GM12878 (cell line): ENCODE measurements at regions of chr12 and their contacts with region 1.

Region 1: GRCh38 chr12:98227162-98227561 is 288.2 kb upstream of the TMPO start:
- DNase-seq: no peak
- ATAC-seq: no peak
- H3K4me3 ChIP-seq: no peak overlapping the region
- H3K27ac ChIP-seq: no peak overlapping the region
- H3K4me1 ChIP-seq: peaks cover 6% of the 10 kb centered on the region
- H3K27me3 ChIP-seq: no peaks in the 10 kb centered on the region
- CTCF ChIP-seq: peak in 1 of 3 experiments; percentile 26; a peak in 1 of 6 replicates
- EP300 ChIP-seq: no peak
- POLR2A ChIP-seq: no peak
- RAD21 ChIP-seq: peak; percentile 47; the same call in 1 of the 2 replicates

Region 2: GRCh38 chr12:98042668-98043067 is 184.5 kb before region 1 on chr12:
- CTCF ChIA-PET with region 1: no interaction called
- POLR2A ChIA-PET with region 1: no interaction called
- RAD21 ChIA-PET with region 1: no interaction called
- SMC1A ChIA-PET with region 1: no interaction called
- in situ Hi-C with region 1: no loop called
- intact Hi-C with region 1: no loop called
- DNase-seq: no peak
- ATAC-seq: no peak
- H3K4me3 ChIP-seq: no peak overlapping the region
- H3K27ac ChIP-seq: no peak overlapping the region
- H3K4me1 ChIP-seq: no peaks in the 10 kb centered on the region
- H3K27me3 ChIP-seq: no peaks in the 10 kb centered on the region
- CTCF ChIP-seq: no peak
- EP300 ChIP-seq: no peak
- POLR2A ChIP-seq: no peak
- RAD21 ChIP-seq: no peak

Region 3: DNA sequence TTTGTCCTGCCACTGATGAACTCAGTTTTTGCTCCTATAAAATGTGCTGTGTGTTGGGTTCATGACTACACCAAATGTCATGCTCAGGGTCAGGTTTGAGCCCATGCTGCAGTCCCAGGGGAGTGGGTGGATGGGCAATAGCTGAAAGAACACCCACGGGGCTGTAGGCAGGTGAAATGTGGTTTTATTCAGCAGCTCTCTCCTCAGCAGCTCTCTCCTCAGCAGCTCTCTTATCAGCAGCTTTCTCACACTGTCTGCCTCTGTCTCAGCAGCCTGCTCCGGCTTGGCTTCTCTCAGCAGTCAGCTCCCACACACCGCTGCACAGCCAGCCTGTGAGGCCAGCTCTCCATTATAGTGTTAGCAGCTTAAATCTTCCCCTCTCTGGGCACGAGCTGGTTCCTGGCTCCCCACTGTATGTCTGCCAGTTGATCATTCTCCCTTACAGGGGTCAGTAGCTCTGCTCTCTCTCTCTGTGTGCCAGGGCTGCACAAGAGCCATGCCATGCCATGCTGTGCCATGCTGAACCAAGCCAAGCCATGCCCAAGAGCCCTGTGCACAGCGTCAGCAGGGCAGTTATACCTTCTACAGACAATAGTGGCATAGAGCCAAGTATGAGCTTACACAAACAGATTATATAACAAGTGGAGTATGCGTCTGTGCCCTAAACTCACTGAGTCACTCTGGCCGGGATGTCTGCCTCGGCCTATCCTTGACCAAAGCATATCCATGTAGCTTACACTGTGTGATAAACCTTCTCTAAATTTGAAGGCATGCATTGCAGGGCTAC is 15.1 kb before region 1 on chr12:
- CTCF ChIA-PET with region 1: interaction called, 7 read pairs
- POLR2A ChIA-PET with region 1: interaction called, 6 read pairs
- RAD21 ChIA-PET with region 1: interaction called, 13 read pairs
- SMC1A ChIA-PET with region 1: interaction called, 16 read pairs
- in situ Hi-C with region 1: no loop called
- intact Hi-C with region 1: no loop called
- DNase-seq: no peak
- ATAC-seq: peak; percentile 84
- H3K4me3 ChIP-seq: no peak overlapping the region
- H3K27ac ChIP-seq: no peak overlapping the region
- H3K4me1 ChIP-seq: no peaks in the 10 kb centered on the region
- H3K27me3 ChIP-seq: no peaks in the 10 kb centered on the region; a peak in 1 of 4 replicates
- CTCF ChIP-seq: no peak
- EP300 ChIP-seq: peak; percentile 9 to 18; a peak in 1 of 4 replicates
- POLR2A ChIP-seq: no peak
- RAD21 ChIP-seq: no peak

Region 4: GRCh38 chr12:98238515-98239130 is 11.5 kb after region 1 on chr12:
- CTCF ChIA-PET with region 1: interaction called, 9 read pairs
- POLR2A ChIA-PET with region 1: interaction called, 7 read pairs
- RAD21 ChIA-PET with region 1: interaction called, 6 read pairs
- SMC1A ChIA-PET with region 1: interaction called, 41 read pairs
- in situ Hi-C with region 1: no loop called
- intact Hi-C with region 1: no loop called
- DNase-seq: no peak
- ATAC-seq: peak; percentile 47
- H3K4me3 ChIP-seq: no peak overlapping the region
- H3K27ac ChIP-seq: no peak overlapping the region
- H3K4me1 ChIP-seq: no peaks in the 10 kb centered on the region
- H3K27me3 ChIP-seq: no peaks in the 10 kb centered on the region; a peak in 1 of 4 replicates
- CTCF ChIP-seq: no peak
- EP300 ChIP-seq: no peak
- POLR2A ChIP-seq: no peak
- RAD21 ChIP-seq: no peak

Region 5: GRCh38 chr12:98244136-98244535 is 17.0 kb after region 1 on chr12:
- CTCF ChIA-PET with region 1: interaction called, 6 read pairs
- POLR2A ChIA-PET with region 1: interaction called, 7 read pairs
- RAD21 ChIA-PET with region 1: interaction called, 6 read pairs
- SMC1A ChIA-PET with region 1: interaction called, 41 read pairs
- in situ Hi-C with region 1: no loop called
- intact Hi-C with region 1: no loop called
- DNase-seq: no peak
- ATAC-seq: no peak
- H3K4me3 ChIP-seq: no peak overlapping the region
- H3K27ac ChIP-seq: no peak overlapping the region
- H3K4me1 ChIP-seq: no peaks in the 10 kb centered on the region
- H3K27me3 ChIP-seq: no peaks in the 10 kb centered on the region; a peak in 1 of 4 replicates
- CTCF ChIP-seq: no peak
- EP300 ChIP-seq: no peak
- POLR2A ChIP-seq: no peak
- RAD21 ChIP-seq: no peak

Region 6: DNA sequence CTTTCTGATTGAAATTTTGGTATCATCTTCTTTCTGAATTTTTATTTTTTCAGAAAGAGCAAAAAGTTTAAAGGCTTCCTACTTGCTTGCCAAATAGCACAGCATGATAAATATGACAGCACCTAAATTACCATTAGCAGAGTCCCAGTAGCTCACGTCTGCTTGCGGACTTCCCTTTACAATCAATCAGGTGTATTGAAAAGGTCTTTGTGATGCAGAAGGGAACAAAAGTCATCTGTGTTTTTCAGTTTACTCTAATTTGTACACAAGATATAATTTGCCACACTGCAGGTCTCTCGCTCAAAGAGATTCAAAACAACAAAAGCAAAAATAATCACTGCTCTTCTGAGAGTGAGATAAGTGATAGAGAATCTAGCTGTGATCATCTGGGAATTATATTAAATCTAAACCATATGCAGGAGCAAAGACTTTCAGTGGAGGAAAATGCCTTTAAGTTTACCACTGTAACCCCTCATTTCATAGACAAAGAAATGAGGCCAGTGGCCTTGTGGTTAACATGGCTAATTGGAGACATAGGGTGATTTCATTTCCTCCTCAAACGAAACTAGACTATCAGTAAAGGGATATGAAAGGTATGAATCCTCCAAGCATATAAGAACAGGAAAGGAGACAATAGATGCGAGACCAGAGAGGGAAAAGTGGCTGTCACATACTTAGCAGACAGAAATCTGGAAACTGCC is 47.4 kb after region 1 on chr12:
- CTCF ChIA-PET with region 1: interaction called, 5 read pairs
- POLR2A ChIA-PET with region 1: interaction called, 8 read pairs
- RAD21 ChIA-PET with region 1: interaction called, 15 read pairs
- SMC1A ChIA-PET with region 1: interaction called, 59 read pairs
- in situ Hi-C with region 1: no loop called
- intact Hi-C with region 1: loop called (anchors 1 kb)
- DNase-seq: peak; percentile 71
- ATAC-seq: peak; percentile 90
- H3K4me3 ChIP-seq: peak overlapping the region; percentile 18; the same call in 1 of the 2 replicates
- H3K27ac ChIP-seq: peak overlapping the region; percentile 50; the same call in 1 of the 2 replicates
- H3K4me1 ChIP-seq: peaks cover 15% of the 10 kb centered on the region
- H3K27me3 ChIP-seq: no peaks in the 10 kb centered on the region
- CTCF ChIP-seq: no peak
- EP300 ChIP-seq: peak; percentile 74 to 96; a peak in 3 of 4 replicates
- POLR2A ChIP-seq: no peak
- RAD21 ChIP-seq: no peak

Region 7: DNA sequence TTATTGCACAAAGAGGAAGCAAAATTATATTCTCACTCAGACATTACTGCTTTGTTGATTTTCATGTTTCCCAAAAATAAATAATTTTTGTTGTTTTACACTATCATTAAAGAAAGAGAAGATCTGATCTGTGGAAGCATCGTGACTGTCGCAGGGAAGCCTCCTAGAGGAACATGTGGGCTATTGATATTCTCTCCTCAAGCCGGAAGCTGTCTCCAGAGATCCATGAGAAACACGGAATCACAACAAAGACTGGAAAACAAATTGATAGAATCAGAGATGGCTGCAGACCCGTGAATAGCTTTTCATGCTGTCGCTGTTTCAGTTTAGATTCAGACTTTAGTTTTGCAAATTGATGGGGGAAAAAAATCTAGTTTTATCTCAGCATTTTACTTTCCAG is 53.0 kb after region 1 on chr12:
- CTCF ChIA-PET with region 1: interaction called, 5 read pairs
- POLR2A ChIA-PET with region 1: interaction called, 8 read pairs
- RAD21 ChIA-PET with region 1: interaction called, 15 read pairs
- SMC1A ChIA-PET with region 1: interaction called, 59 read pairs
- in situ Hi-C with region 1: no loop called
- intact Hi-C with region 1: no loop called
- DNase-seq: no peak
- ATAC-seq: no peak
- H3K4me3 ChIP-seq: no peak overlapping the region
- H3K27ac ChIP-seq: no peak overlapping the region
- H3K4me1 ChIP-seq: peaks cover 5% of the 10 kb centered on the region
- H3K27me3 ChIP-seq: no peaks in the 10 kb centered on the region
- CTCF ChIP-seq: no peak
- EP300 ChIP-seq: no peak
- POLR2A ChIP-seq: no peak
- RAD21 ChIP-seq: no peak

Region 8: GRCh38 chr12:98319716-98320425 is 92.7 kb after region 1 on chr12:
- CTCF ChIA-PET with region 1: no interaction called
- POLR2A ChIA-PET with region 1: interaction called, 5 read pairs
- RAD21 ChIA-PET with region 1: interaction called, 7 read pairs
- SMC1A ChIA-PET with region 1: interaction called, 5 read pairs
- in situ Hi-C with region 1: no loop called
- intact Hi-C with region 1: loop called (anchors 2 kb)
- DNase-seq: no peak
- ATAC-seq: peak; percentile 4; the same call in 2 of the 3 replicates
- H3K4me3 ChIP-seq: no peak overlapping the region
- H3K27ac ChIP-seq: no peak overlapping the region
- H3K4me1 ChIP-seq: peaks cover 2% of the 10 kb centered on the region; the same call in 1 of the 2 replicates
- H3K27me3 ChIP-seq: no peaks in the 10 kb centered on the region
- CTCF ChIP-seq: no peak
- EP300 ChIP-seq: no peak
- POLR2A ChIP-seq: no peak
- RAD21 ChIP-seq: no peak

Region 9: GRCh38 chr12:98388126-98388525 is 161.0 kb after region 1 on chr12:
- CTCF ChIA-PET with region 1: no interaction called
- POLR2A ChIA-PET with region 1: no interaction called
- RAD21 ChIA-PET with region 1: no interaction called
- SMC1A ChIA-PET with region 1: no interaction called
- in situ Hi-C with region 1: no loop called
- intact Hi-C with region 1: no loop called
- DNase-seq: no peak
- ATAC-seq: no peak
- H3K4me3 ChIP-seq: no peak overlapping the region
- H3K27ac ChIP-seq: no peak overlapping the region
- H3K4me1 ChIP-seq: no peaks in the 10 kb centered on the region
- H3K27me3 ChIP-seq: peaks cover 0 to 3% of the 10 kb centered on the region in 2 experiments; a peak in 1 of 4 replicates
- CTCF ChIP-seq: no peak
- EP300 ChIP-seq: no peak
- POLR2A ChIP-seq: no peak
- RAD21 ChIP-seq: no peak